Heart right ventricle (tissue), 16 donors: ENCODE measurements at regions of chr20 and their contacts with region 1.

Region 1: DNA sequence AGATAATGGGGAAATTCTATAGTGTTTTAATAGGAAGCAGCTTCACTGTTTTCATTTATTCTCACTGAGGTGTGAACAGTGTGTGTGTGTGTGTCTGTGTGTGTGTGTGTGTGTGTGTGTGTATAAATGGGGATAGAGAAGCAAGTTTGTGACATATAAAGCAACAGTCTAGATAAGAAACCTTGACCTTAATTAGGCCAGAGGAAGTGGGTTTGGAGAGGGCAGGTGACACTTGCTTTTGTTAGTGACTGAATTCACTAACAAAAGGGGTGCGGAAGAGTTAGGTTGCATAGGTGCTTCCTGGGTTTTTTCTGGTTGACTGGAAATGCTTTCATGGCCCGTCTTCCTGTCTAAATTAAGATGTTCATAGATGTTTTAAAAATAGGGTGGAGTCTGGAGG is 515.7 kb upstream of the FLRT3 start:
- DNase-seq: no peak
- ATAC-seq: no peak
- H3K4me3 ChIP-seq: no peak overlapping the region
- H3K27ac ChIP-seq: no peak overlapping the region
- H3K4me1 ChIP-seq: no peaks in the 10 kb centered on the region
- H3K27me3 ChIP-seq: no peaks in the 10 kb centered on the region
- CTCF ChIP-seq: no peak

Region 2: DNA sequence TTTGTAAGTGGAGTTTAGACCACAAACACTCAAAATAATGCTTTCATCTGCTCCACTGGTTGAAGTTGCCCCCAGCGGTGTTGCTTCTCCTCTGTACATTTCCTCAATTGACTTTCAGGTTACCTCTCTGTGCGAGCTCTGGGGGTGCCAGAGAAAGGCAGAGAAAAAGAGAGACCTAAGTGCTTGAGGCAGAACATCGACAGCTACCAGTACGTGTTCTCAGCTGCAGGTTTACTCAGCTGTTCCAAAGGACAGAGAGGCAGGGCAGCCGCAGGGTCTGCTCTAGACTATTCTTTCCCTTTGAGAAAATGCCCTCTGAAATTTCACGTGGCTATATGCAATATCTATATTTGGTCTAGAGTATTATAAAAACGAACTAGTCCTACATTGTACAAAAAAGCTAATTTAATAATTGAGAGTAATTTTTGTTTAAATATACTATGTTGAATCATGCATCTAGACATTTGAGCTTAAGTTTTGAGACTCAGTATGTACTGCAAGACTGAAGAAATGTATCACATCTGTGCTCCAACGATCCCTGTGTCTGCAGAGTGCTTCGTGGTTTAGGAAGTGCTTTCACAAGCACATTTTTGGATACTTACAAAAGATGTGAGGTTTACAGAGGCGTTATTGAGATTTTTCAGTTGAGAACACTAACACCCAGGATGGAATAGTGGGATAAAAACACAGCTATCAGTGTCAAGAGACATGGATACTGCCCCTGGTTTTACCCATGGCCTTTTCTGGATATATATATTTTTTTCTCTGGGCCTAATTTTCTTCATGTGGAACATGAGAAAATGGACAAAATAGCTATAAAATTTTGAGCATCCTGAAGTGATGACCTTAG is 62.1 kb before region 1 on chr20:
- intact Hi-C with region 1: loop called in 1 of 10 experiments (anchors 5 kb)
- DNase-seq: no peak
- ATAC-seq: no peak
- H3K4me3 ChIP-seq: no peak overlapping the region
- H3K27ac ChIP-seq: no peak overlapping the region
- H3K4me1 ChIP-seq: no peaks in the 10 kb centered on the region
- H3K27me3 ChIP-seq: no peaks in the 10 kb centered on the region
- CTCF ChIP-seq: no peak

Region 3: GRCh38 chr20:14902432-14903089 is 49.5 kb after region 1 on chr20:
- intact Hi-C with region 1: no loop called
- DNase-seq: no peak
- ATAC-seq: no peak
- H3K4me3 ChIP-seq: no peak overlapping the region
- H3K27ac ChIP-seq: no peak overlapping the region
- H3K4me1 ChIP-seq: no peaks in the 10 kb centered on the region
- H3K27me3 ChIP-seq: no peaks in the 10 kb centered on the region
- CTCF ChIP-seq: no peak

Region 4: GRCh38 chr20:14972256-14972655 is 119.2 kb after region 1 on chr20:
- intact Hi-C with region 1: no loop called
- DNase-seq: no peak
- ATAC-seq: no peak
- H3K4me3 ChIP-seq: no peak overlapping the region
- H3K27ac ChIP-seq: no peak overlapping the region
- H3K4me1 ChIP-seq: no peaks in the 10 kb centered on the region
- H3K27me3 ChIP-seq: no peaks in the 10 kb centered on the region
- CTCF ChIP-seq: no peak